Dorsolateral prefrontal cortex (tissue), 120 donors: ENCODE measurements at regions of chr11 and their contacts with region 1.

Region 1: DNA sequence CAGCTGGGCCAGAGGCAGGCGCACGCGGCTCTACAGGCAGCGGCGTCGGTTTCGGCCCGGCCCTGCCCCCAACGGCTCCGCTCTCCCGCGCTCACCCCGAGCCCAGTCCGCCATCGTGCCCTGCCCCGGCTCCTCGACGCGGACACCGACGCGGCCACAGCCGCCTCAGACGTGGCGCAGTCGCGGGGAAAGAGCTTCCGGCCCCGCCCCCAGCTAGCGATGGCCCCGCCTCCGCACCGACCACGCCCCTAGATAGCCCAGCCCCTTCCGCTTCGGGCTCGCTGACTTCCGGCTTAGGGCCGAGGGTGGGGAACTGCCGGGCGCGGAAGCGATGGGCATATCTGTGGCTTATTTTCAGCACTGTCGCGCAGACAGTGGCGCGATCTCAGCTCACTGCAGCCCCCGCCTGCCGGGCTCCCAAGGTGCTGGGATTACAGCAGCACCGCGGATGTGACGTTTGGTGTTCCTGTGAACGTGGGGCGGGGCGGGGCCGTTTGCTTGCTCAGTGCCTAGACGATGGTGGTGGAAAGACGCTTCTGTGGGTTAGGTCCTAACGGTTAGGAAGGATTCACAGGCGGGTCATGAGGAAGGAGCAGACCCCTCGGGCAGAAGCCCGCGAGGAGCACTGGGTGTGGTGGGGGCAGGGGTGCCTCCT is at the starts of genes BET1L and RIC8A:
- DNase-seq: peak; percentile 91 to 99 (median 98)
- H3K4me3 ChIP-seq: peak within 1 kb of the TSS; percentile 53 to 100 (median 96)
- H3K27ac ChIP-seq: peak within 1 kb of the TSS; percentile 71 to 99 (median 95)
- H3K27me3 ChIP-seq: no peaks in the 10 kb centered on the region
- CTCF ChIP-seq: peak in 36 of 56 donors; percentile 10 to 59 (median 28)
- total RNA-seq, gene BET1L: 22.9 to 47.4 (median 33.0) TPM
- total RNA-seq, gene RIC8A: 55.0 to 104 (median 78.7) TPM

Region 2: DNA sequence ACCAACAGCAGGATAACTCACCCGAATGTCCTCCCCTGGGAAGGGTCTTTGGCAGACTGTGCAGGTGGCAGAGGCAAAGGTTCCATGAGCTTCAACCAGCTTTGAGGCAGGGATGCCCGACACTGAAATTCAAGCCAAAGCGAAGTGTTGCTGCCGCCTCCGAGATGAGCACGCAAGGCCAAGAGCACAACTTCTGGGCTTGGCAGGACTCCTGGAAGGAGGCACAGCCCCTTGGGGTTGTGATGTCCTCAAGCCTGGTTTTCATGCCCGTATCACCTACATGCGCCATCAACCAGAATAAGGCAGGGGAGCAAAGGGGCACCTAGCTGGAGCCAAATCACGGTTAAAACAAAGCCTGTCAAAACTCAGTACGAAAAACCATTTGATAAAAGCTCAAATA is 23.1 kb after region 1 on chr11:
- intact Hi-C with region 1: no loop called
- DNase-seq: peak in 1 of 10 donors; percentile 20
- H3K4me3 ChIP-seq: no peak overlapping the region
- H3K27ac ChIP-seq: no peak overlapping the region
- H3K27me3 ChIP-seq: no peaks in the 10 kb centered on the region
- CTCF ChIP-seq: no peak

Region 3: DNA sequence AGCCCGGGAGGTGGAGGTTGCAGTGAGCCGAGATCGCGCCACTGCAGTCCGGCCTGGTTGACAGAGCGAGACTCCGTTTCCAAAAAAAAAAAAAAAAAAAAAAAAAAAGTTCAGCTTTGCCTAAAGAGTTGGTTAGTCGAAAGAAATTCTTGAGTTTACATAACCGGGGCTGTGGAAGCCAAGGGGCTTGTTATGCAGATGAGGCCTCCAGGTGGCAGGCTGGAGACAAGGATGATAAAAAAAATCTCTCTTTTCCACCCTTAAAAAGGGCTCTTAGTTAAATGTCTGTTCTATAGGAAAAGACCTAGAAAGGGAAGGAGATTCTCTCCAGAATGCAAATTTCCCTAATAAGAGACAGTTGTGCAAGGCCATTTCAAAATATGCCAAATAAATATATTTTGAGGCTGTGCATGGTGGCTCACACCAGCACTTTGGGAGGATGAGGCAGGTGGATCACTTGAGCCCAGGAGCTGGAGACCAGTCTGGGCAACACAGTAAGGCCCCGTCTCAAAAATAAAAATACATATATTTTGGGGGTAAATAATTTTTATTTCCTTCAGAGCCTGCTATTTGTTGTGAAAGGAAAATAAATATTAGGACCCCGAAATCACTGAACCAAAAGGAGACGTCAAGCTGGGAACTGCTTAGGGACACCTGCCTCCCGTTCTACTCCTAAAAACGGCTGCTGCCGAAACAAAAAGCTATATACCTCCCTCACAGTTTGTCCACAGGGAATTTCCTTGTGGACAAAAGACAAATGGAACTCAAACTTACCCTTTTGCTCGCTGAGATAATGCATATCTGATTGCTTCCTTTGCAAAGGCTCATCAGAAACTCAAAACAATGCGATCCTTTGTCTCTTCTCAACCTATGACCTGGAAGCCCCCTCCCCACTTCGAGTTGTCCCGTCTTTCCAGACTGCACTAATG is 97.8 kb after region 1 on chr11:
- intact Hi-C with region 1: no loop called
- DNase-seq: peak in 6 of 10 donors; percentile 20 to 64 (median 48)
- H3K4me3 ChIP-seq: no peak overlapping the region
- H3K27ac ChIP-seq: peak overlapping the region in 1 of 59 donors; percentile 44
- H3K27me3 ChIP-seq: peaks cover 0 to 17% (median 0%) of the 10 kb centered on the region in 45 donors
- CTCF ChIP-seq: peak in 55 of 56 donors; percentile 33 to 75 (median 60)

Region 4: GRCh38 chr11:369336-370018 is 162.1 kb after region 1 on chr11 and contains the start of gene B4GALNT4:
- intact Hi-C with region 1: loop called (anchors 5 to 10 kb)
- DNase-seq: peak in 9 of 10 donors; percentile 57 to 84 (median 69)
- H3K4me3 ChIP-seq: peak within 1 kb of the TSS; percentile 35 to 78 (median 62)
- H3K27ac ChIP-seq: peak within 1 kb of the TSS in 52 of 59 donors; percentile 1 to 97 (median 77)
- H3K27me3 ChIP-seq: no peaks in the 10 kb centered on the region
- CTCF ChIP-seq: no peak
- total RNA-seq, gene B4GALNT4: 81.4 to 330 (median 132) TPM